HepG2 (cell line): ENCODE measurements at regions of chr6 and their contacts with region 1.

Region 1: DNA sequence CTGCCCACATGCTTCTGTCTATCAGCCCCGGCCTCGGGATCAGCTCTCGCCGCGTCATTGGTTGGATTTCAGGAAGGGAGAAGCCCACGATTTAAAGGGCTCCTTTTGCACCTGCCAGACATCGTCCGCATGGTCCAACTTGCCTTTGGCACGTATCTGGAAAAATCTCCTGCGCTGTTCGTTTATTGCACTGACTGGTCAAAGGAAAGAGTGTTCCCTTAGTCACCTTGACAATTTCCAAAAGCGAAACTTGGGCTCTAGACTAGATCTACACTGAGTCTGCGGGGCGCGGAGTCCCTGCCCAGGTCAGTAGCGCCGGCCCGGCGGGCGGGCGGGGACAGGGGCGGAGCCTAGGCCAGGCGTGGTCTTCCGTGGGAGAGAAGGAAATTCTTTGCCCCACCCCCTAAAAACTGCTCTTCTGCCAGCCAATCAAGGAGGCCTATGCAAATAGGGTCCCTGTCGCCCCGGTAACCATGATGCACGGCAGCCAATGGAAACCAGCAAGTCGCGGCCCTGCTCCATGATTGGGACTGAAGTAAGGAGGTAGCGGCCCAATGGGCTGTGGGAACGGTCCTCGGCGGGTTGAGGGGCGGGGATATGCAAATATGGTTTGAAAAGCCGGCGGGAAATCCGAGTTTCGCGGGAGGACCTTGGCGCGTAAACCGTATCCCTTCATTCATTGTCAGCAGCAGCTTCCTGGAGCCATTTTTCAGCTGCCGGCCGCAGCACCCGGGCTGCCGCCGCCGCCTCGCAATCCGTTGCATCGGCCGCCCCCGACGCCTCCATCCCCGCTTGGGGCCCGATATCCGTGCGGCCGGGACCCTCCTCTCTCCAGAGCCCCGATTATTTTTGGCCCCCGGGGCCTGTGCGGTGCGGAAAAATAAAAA is at the start of gene E2F3:
- DNase-seq: peak; percentile 100
- ATAC-seq: peak; percentile 88
- H3K4me3 ChIP-seq: peak within 1 kb of the TSS; percentile 83 to 92 (median 86)
- H3K27ac ChIP-seq: peak within 1 kb of the TSS; percentile 93
- H3K4me1 ChIP-seq: peaks cover 25% of the 10 kb centered on the region; the same call in 1 of the 2 replicates
- H3K27me3 ChIP-seq: peaks cover 0 to 10% of the 10 kb centered on the region in 2 experiments; a peak in 1 of 5 replicates
- CTCF ChIP-seq: no peak
- EP300 ChIP-seq: no peak
- POLR2A ChIP-seq: peak; percentile 86 to 92
- RAD21 ChIP-seq: peak; percentile 52
- total RNA-seq, gene E2F3: 12.7 and 14.2 TPM in 2 replicates

Region 2: GRCh38 chr6:19804205-19805123 is 597.0 kb before region 1 on chr6:
- CTCF ChIA-PET with region 1: no interaction called
- POLR2A ChIA-PET with region 1: no interaction called
- in situ Hi-C with region 1: no loop called
- intact Hi-C with region 1: loop called (anchors 10 kb)
- DNase-seq: peak; percentile 95
- ATAC-seq: peak; percentile 98
- H3K4me3 ChIP-seq: peak overlapping the region; percentile 62 to 82 (median 77)
- H3K27ac ChIP-seq: peak overlapping the region; percentile 84
- H3K4me1 ChIP-seq: peaks cover 34% of the 10 kb centered on the region
- H3K27me3 ChIP-seq: no peaks in the 10 kb centered on the region
- CTCF ChIP-seq: 0 out of 2 replicates have a peak, but pooled peaks have one; percentile 13
- EP300 ChIP-seq: peak; percentile 91 to 99
- POLR2A ChIP-seq: peak; percentile 76 to 80
- RAD21 ChIP-seq: peak; percentile 78

Region 3: GRCh38 chr6:20291764-20292580 is 109.5 kb before region 1 on chr6:
- CTCF ChIA-PET with region 1: interaction called, 4 read pairs
- POLR2A ChIA-PET with region 1: no interaction called
- in situ Hi-C with region 1: no loop called
- intact Hi-C with region 1: loop called (anchors 2 kb)
- DNase-seq: peak; percentile 75
- ATAC-seq: peak; percentile 96
- H3K4me3 ChIP-seq: no peak overlapping the region
- H3K27ac ChIP-seq: no peak overlapping the region
- H3K4me1 ChIP-seq: no peaks in the 10 kb centered on the region
- H3K27me3 ChIP-seq: no peaks in the 10 kb centered on the region
- CTCF ChIP-seq: peak; percentile 95
- EP300 ChIP-seq: no peak
- POLR2A ChIP-seq: no peak
- RAD21 ChIP-seq: peak; percentile 82

Region 4: DNA sequence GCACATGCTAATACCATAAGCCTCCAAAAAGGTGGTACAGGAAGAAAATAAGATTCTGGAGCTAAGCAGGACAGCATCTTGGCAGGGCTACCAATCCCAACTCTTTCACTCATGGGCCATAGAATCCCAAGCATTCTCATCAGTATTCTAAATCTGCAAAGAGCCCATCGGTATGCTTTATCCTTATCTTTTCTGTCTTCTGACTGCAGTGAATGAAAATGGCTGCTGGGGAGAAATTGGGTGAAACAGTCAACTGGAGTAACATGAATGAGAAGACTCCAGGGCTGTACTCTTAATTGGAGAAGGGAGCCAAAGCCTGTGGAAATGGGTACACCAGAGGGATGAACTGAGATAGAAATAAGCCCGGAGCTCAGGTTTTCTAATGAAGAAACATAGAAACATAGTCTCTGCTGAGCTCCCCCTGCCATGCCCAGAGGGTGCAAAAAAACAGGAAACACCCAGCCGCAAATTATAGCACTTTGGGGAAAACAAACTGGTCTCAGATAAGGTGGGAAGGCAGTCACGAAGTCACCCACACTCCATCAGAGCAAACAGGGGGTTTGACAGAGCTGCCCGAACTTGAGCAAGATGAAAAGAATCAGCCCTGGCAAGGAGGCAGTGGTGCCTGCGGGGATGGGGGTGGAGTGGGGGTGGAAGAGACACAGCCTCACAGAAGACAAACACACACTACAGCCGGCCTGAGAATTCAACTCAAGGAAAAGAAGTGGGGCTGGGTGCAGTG is 35.2 kb before region 1 on chr6:
- CTCF ChIA-PET with region 1: no interaction called
- POLR2A ChIA-PET with region 1: no interaction called
- in situ Hi-C with region 1: no loop called
- intact Hi-C with region 1: no loop called
- DNase-seq: no peak
- ATAC-seq: no peak
- H3K4me3 ChIP-seq: no peak overlapping the region
- H3K27ac ChIP-seq: no peak overlapping the region
- H3K4me1 ChIP-seq: no peaks in the 10 kb centered on the region
- H3K27me3 ChIP-seq: peaks cover 0 to 7% of the 10 kb centered on the region in 2 experiments; a peak in 4 of 5 replicates
- CTCF ChIP-seq: no peak
- EP300 ChIP-seq: no peak
- POLR2A ChIP-seq: no peak
- RAD21 ChIP-seq: no peak

Region 5: GRCh38 chr6:20427856-20428255 is 26.4 kb after region 1 on chr6:
- CTCF ChIA-PET with region 1: no interaction called
- POLR2A ChIA-PET with region 1: interaction called, 3 read pairs
- in situ Hi-C with region 1: no loop called
- intact Hi-C with region 1: loop called (anchors 1 kb)
- DNase-seq: peak; percentile 32
- ATAC-seq: peak; percentile 93
- H3K4me3 ChIP-seq: no peak overlapping the region
- H3K27ac ChIP-seq: peak overlapping the region; percentile 49
- H3K4me1 ChIP-seq: peaks cover 40% of the 10 kb centered on the region
- H3K27me3 ChIP-seq: no peaks in the 10 kb centered on the region
- CTCF ChIP-seq: no peak
- EP300 ChIP-seq: no peak
- POLR2A ChIP-seq: no peak
- RAD21 ChIP-seq: no peak

Region 6: GRCh38 chr6:20444786-20445271 is 43.4 kb after region 1 on chr6:
- CTCF ChIA-PET with region 1: no interaction called
- POLR2A ChIA-PET with region 1: no interaction called
- in situ Hi-C with region 1: no loop called
- intact Hi-C with region 1: loop called (anchors 5 kb)
- DNase-seq: no peak
- ATAC-seq: no peak
- H3K4me3 ChIP-seq: no peak overlapping the region
- H3K27ac ChIP-seq: no peak overlapping the region
- H3K4me1 ChIP-seq: peaks cover 40% of the 10 kb centered on the region
- H3K27me3 ChIP-seq: no peaks in the 10 kb centered on the region
- CTCF ChIP-seq: no peak
- EP300 ChIP-seq: no peak
- POLR2A ChIP-seq: no peak
- RAD21 ChIP-seq: no peak

Region 7: DNA sequence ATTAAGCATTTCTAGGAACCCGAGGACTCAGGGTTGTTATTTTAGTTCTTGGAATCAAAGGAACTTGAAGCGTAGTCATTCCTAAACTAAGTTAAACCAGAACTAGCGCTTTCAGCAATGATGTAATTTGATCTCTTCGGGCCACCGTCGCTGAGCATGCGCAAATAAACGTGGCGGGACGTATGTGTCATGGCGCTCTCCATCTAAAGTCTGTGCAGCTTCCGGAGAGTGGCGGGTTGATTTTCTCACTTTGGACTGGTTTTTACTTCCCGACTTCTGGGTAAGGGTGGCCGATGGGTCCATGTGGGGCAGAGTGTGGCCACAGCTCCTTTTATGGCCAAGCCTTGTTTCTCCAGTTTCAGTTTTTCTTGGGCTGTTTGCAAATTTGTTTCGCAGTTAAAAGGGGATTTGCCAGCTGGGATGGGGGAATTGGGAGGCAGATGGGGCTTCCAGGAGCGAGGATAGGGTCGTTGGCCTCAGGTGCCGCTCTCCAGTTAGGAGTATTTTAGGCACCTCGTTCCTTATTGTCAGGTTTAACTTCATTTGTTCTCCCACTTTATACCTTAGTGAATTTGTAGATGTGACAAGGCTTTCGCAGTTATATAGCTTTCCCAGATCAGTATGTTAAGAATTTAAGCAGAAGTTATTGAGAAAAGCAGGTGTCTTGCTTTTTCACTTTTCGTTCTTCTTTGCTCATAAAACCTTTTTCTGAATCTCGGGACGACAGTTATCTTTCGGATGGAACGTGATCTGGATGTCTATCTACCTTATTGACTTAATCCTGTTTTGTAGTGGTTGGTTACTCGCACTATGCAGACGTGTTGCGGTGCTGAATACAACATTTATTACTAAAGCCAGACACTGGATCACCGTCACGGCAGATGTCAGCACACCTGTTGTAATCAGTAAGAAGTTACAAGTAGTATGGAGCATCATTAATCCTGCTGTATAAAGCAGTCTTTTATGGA is 133.1 kb after region 1 on chr6 and contains the start of gene CDKAL1:
- CTCF ChIA-PET with region 1: interaction called, 24 read pairs
- POLR2A ChIA-PET with region 1: interaction called, 7 read pairs
- in situ Hi-C with region 1: loop called (anchors 5 kb)
- intact Hi-C with region 1: loop called (anchors 1 kb)
- DNase-seq: peak; percentile 91
- ATAC-seq: peak; percentile 97
- H3K4me3 ChIP-seq: peak within 1 kb of the TSS; percentile 84 to 91 (median 86)
- H3K27ac ChIP-seq: peak within 1 kb of the TSS; percentile 84
- H3K4me1 ChIP-seq: peaks cover 29% of the 10 kb centered on the region
- H3K27me3 ChIP-seq: peaks cover 0 to 5% of the 10 kb centered on the region in 2 experiments; a peak in 1 of 5 replicates
- CTCF ChIP-seq: no peak
- EP300 ChIP-seq: 0 out of 4 replicates have a peak, but pooled peaks of 1 of the 2 experiments have one; percentile 38
- POLR2A ChIP-seq: peak; percentile 84 to 95
- RAD21 ChIP-seq: no peak
- total RNA-seq, gene CDKAL1: 27.7 and 33.6 TPM in 2 replicates